ENCODE measurements at regions of chr13 and their contacts with region 1.

Region 1: GRCh38 chr13:40438999-40439797 is 227.2 kb downstream of the FOXO1 start:
- DNase-seq: peak; percentile 74
- H3K4me3 Mint-ChIP-seq: peak overlapping the region; percentile 61
- H3K27ac Mint-ChIP-seq: peak overlapping the region; percentile 50
- H3K4me1 Mint-ChIP-seq: peaks cover 36% of the 10 kb centered on the region
- H3K27me3 Mint-ChIP-seq: no peaks in the 10 kb centered on the region

Region 2: DNA sequence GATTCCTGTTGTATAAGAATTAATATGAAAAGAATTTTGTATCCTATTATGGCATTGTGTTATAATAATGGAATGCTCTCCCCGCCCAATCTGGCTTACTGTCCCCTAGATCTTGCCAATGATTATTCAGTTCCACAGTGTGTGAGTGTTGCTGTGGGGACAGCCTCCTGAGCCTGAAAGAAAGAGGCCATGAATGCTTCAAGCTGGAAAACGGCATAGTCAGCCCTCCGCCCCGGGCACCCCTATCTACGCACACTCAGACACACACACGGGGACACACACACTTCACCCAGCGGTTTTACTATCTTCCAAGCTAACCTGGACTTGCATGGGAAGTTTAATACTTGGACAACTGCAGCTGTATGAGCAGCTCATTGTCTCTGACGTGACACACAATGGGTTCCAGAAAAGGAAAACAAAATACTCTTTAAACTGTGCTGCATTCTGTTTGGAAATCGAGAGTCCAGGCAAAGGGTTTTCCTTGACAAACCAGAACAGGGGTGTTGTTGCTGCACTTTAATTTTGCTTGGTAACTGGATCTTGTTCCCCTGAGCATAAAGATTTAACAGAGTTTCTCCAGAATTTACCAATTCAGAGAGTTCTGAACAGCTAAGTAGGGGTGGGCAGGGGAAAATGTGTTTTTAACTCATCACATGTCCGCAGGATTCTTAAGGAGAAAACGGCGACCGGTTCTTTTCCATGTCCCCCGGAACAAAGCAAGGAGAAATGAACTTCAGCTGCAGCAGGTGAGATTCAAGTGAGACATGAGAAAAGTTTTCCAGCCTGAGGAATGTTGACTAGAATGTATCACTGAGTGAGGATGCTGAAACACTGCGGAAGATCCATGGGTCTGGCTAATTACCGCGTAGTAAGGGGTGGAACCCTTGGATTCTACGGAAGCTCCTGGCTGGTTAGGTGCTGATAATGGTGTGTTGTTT is 245.6 kb before region 1 on chr13:
- intact Hi-C with region 1: no loop called
- DNase-seq: no peak
- H3K4me3 Mint-ChIP-seq: no peak overlapping the region
- H3K27ac Mint-ChIP-seq: no peak overlapping the region
- H3K4me1 Mint-ChIP-seq: peaks cover 39% of the 10 kb centered on the region
- H3K27me3 Mint-ChIP-seq: no peaks in the 10 kb centered on the region

Region 3: GRCh38 chr13:40485611-40486517 is 46.7 kb after region 1 on chr13:
- intact Hi-C with region 1: loop called (anchors 2 kb)
- DNase-seq: peak; percentile 87
- H3K4me3 Mint-ChIP-seq: peak overlapping the region; percentile 69
- H3K27ac Mint-ChIP-seq: peak overlapping the region; percentile 90
- H3K4me1 Mint-ChIP-seq: peaks cover 55% of the 10 kb centered on the region
- H3K27me3 Mint-ChIP-seq: no peaks in the 10 kb centered on the region